B cell (primary cell): ENCODE measurements at regions of chr18 and their contacts with region 1.

Region 1: GRCh38 chr18:55328301-55328700 is 259.7 kb downstream of the TCF4 start:
- DNase-seq: peak; percentile 59
- ATAC-seq: peak; percentile 59
- H3K4me3 ChIP-seq: peak overlapping the region in 1 of 5 experiments; percentile 42
- H3K4me3 Mint-ChIP-seq: peak overlapping the region; percentile 70
- H3K27ac ChIP-seq: peak overlapping the region; percentile 46 to 58
- H3K27ac Mint-ChIP-seq: peak overlapping the region; percentile 78
- H3K4me1 ChIP-seq: peaks cover 36 to 50% of the 10 kb centered on the region in 2 donors
- H3K4me1 Mint-ChIP-seq: peaks cover 61% of the 10 kb centered on the region
- H3K27me3 ChIP-seq: no peaks in the 10 kb centered on the region
- H3K27me3 Mint-ChIP-seq: no peaks in the 10 kb centered on the region
- CTCF ChIP-seq: no peak

Region 2: DNA sequence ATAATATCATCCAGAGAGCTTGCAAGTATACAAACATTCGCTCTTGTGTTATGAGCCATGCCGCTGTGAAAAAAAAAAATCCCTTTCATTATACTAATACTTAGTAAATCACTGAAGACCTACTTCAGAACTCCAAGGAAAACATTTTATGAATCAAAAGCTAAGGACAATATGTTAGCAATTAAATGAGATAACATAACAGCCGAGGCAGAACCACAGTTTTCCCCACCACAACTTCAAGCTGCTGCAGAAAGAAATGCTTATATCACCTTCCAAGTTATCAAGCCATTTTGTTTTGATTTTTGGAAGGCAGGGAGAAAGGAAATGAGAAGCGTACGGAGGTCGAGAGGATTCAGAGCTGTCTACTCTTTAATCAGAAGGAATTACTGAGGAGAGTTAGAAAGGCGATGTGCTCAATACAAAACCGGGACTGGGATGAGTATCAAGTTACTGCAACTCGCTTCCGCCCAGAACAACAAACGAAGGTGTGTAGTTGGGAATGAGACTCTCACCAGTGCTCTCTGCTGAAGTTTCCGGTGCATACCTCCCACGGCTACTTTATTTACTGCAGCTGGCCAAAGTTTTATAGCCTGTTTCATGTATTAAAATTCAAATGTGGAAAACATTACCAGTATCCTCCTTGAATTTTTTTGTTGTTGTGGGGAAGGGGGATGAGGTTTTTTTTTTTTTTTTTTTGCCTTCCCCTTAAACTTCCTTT is 76.9 kb before region 1 on chr18:
- CTCF ChIA-PET with region 1: no interaction called
- POLR2A ChIA-PET with region 1: no interaction called
- intact Hi-C with region 1: loop called (anchors 1 kb)
- DNase-seq: no peak
- ATAC-seq: no peak
- H3K4me3 ChIP-seq: no peak overlapping the region
- H3K4me3 Mint-ChIP-seq: peak overlapping the region; percentile 52
- H3K27ac ChIP-seq: peak overlapping the region in 1 of 2 donors; percentile 31
- H3K27ac Mint-ChIP-seq: peak overlapping the region; percentile 59
- H3K4me1 ChIP-seq: peaks cover 45 to 52% of the 10 kb centered on the region in 2 donors
- H3K4me1 Mint-ChIP-seq: peaks cover 63% of the 10 kb centered on the region
- H3K27me3 ChIP-seq: no peaks in the 10 kb centered on the region
- H3K27me3 Mint-ChIP-seq: no peaks in the 10 kb centered on the region
- CTCF ChIP-seq: no peak